ENCODE measurements at regions of chr3 and their contacts with region 1.

Region 1: GRCh38 chr3:197878427-197878826 is 71.6 kb upstream of the RPL35A start:
- DNase-seq: peak; percentile 46
- H3K4me3 Mint-ChIP-seq: peak overlapping the region; percentile 65
- H3K27ac Mint-ChIP-seq: peak overlapping the region; percentile 90
- H3K4me1 Mint-ChIP-seq: peaks cover 25% of the 10 kb centered on the region
- H3K27me3 Mint-ChIP-seq: no peaks in the 10 kb centered on the region

Region 2: GRCh38 chr3:197050511-197050910 is 827.9 kb before region 1 on chr3:
- intact Hi-C with region 1: no loop called
- DNase-seq: no peak
- H3K4me3 Mint-ChIP-seq: no peak overlapping the region
- H3K27ac Mint-ChIP-seq: no peak overlapping the region
- H3K4me1 Mint-ChIP-seq: peaks cover 6% of the 10 kb centered on the region
- H3K27me3 Mint-ChIP-seq: no peaks in the 10 kb centered on the region

Region 3: GRCh38 chr3:197847866-197848401 is 30.5 kb before region 1 on chr3:
- intact Hi-C with region 1: loop called (anchors 1 kb)
- DNase-seq: peak; percentile 18
- H3K4me3 Mint-ChIP-seq: peak overlapping the region; percentile 52
- H3K27ac Mint-ChIP-seq: peak overlapping the region; percentile 83
- H3K4me1 Mint-ChIP-seq: peaks cover 30% of the 10 kb centered on the region
- H3K27me3 Mint-ChIP-seq: no peaks in the 10 kb centered on the region

Region 4: DNA sequence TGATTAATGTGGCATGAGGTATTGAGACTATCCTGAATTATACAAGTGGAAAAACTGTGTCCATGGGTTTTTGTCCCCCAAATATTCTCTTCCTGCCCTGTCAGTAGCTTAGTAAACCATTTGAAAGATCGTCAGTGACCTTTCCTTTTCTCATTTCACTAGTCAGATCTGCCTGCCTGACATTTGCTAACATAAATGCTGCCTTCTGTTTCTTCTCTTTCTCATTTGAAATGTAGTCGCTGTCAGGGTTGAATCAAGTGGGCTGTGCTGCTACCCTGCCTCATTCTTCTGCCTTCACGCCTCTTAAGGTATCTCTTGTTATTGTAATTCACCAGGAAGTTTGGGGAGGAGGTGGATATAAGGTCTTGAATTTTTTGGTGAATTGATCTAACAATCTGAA is 19.8 kb before region 1 on chr3:
- intact Hi-C with region 1: loop called (anchors 2 kb)
- DNase-seq: no peak
- H3K4me3 Mint-ChIP-seq: no peak overlapping the region
- H3K27ac Mint-ChIP-seq: peak overlapping the region; percentile 33
- H3K4me1 Mint-ChIP-seq: peaks cover 10% of the 10 kb centered on the region
- H3K27me3 Mint-ChIP-seq: no peaks in the 10 kb centered on the region

Region 5: DNA sequence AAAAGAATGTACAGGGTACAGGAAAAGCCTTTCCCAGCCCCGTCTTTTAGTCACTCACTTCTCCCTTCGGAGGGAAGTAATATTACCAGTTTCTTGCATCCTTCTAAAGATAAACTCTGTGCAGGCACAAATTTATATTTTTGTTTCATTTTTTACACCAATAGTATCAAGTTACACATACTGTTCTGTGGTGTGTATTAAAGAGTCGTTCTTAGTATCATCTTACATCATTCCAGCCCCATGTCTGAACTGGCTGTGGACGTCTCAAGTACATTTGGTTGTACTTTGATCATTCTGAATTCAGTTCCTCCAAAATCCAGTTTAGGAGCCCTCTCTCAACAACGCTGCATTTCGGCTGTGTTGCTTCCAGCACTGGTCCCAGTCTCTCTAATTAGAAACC is 150.3 kb after region 1 on chr3:
- intact Hi-C with region 1: no loop called
- DNase-seq: no peak
- H3K4me3 Mint-ChIP-seq: no peak overlapping the region
- H3K27ac Mint-ChIP-seq: no peak overlapping the region
- H3K4me1 Mint-ChIP-seq: no peaks in the 10 kb centered on the region
- H3K27me3 Mint-ChIP-seq: no peaks in the 10 kb centered on the region

Region 6: GRCh38 chr3:198051836-198052235 is 173.4 kb after region 1 on chr3:
- intact Hi-C with region 1: no loop called
- DNase-seq: no peak
- H3K4me3 Mint-ChIP-seq: no peak overlapping the region
- H3K27ac Mint-ChIP-seq: no peak overlapping the region
- H3K4me1 Mint-ChIP-seq: no peaks in the 10 kb centered on the region
- H3K27me3 Mint-ChIP-seq: peaks cover 13% of the 10 kb centered on the region

Measured in activated T-helper 1 cell treated with anti-CD3 and anti-CD28 coated beads, Interleukin-12 subunit alpha, Interleukin-12 subunit beta, Interleukin-2, Interleukin-4 antibody, amounts not matched to agents 30 ng/mL and 10 ng/mL and 1 ng/mL, durations not matched to agents 14 hours and 24 hours and 36 hours (primary cell).